Activated T-helper 2 cell treated with anti-CD3 and anti-CD28 coated beads, Interferon-gamma antibody, Interleukin-2, Interleukin-4, amounts not matched to agents 10 μg/mL and 5 μg/mL and 100 μg/mL, durations not matched to agents 14 hours and 24 hours and 36 hours (primary cell): ENCODE measurements at regions of chr20 and their contacts with region 1.

Region 1: DNA sequence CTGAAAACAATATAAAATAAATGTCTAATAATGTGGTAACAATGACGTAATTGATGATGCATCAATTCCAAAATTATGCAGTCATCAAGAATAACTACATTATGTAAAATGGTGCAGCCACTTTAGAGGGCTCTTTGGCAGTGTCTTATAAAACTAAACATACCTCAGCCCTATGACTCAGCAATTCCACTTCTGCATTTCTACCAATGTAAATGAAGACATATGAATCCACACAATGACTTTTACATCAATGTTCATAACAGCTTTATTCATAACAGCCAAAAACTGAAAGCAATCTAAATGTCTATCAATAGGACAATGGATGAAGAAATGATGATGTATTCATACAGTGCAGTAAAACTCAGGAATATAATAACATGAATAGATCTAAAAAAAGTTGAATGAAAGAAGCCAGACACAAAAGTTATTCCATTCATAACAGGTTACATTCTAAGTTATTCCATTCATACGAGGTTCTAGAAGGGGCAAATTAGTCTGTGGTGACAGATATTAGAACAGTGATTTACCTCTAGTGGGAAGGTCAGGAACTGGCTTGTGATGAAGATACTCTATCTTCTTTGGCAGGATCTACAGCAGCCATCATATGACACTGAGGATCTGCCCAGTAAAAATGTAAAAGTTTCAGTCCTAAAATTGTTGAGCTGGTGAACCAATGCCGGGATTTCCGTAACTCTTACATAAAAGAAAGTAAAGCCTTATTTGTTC is 396.1 kb downstream of the PLCB1 start:
- DNase-seq: no peak
- H3K4me3 Mint-ChIP-seq: no peak overlapping the region
- H3K27ac Mint-ChIP-seq: no peak overlapping the region
- H3K4me1 Mint-ChIP-seq: no peaks in the 10 kb centered on the region
- H3K27me3 Mint-ChIP-seq: no peaks in the 10 kb centered on the region

Region 2: GRCh38 chr20:8464368-8464767 is 63.8 kb before region 1 on chr20:
- intact Hi-C with region 1: loop called (anchors 10 kb)
- DNase-seq: no peak
- H3K4me3 Mint-ChIP-seq: no peak overlapping the region
- H3K27ac Mint-ChIP-seq: no peak overlapping the region
- H3K4me1 Mint-ChIP-seq: no peaks in the 10 kb centered on the region
- H3K27me3 Mint-ChIP-seq: no peaks in the 10 kb centered on the region

Region 3: DNA sequence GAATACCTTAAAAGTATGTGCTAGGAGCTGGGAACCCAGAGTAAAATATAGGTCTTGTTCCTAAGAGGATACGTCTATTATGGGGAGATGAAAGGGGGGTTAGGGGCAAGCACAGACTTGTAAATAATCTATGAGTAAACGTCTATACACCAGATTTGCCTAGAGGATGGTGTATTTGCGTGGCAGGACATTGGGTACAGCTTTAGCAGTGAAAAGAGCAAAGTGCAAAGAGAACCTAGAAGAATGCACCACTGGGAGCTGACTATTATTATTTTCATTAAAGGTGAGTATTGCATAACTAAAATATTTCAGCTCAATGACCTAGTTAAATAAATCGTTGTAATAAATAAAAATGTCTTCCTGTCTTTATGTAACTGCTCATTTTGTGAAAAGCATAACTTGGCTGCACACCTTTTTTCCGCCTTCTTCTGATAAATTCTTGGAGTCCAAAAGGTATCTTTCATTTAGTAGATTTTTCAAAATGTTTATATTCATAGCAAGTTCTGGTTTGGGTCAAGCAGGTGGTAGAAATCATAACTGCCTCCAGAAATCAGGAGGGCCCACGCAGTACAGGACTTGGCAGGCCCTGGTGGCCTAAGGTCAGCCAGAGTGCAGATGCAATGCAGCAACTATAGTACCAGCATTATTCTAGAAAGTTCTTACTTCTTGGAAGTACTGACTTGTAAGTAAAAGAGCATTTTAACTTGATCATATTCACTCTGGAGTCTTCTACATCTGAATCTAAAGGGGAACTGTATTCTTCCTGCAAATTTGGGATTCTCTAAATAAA is 38.9 kb before region 1 on chr20:
- intact Hi-C with region 1: no loop called
- DNase-seq: no peak
- H3K4me3 Mint-ChIP-seq: no peak overlapping the region
- H3K27ac Mint-ChIP-seq: no peak overlapping the region
- H3K4me1 Mint-ChIP-seq: no peaks in the 10 kb centered on the region
- H3K27me3 Mint-ChIP-seq: no peaks in the 10 kb centered on the region